Posterior vena cava (tissue), 2 donors: ENCODE measurements at regions of chr17 and their contacts with region 1.

Region 1: GRCh38 chr17:8118769-8119580 is 661 bp upstream of the ALOXE3 start:
- DNase-seq: peak; percentile 96

Region 2: GRCh38 chr17:7266784-7267183 is 852.2 kb before region 1 on chr17:
- intact Hi-C with region 1: loop called in 1 of 2 experiments (anchors 5 kb)
- DNase-seq: no peak

Region 3: GRCh38 chr17:8068736-8069586 is 50.0 kb before region 1 on chr17:
- intact Hi-C with region 1: loop called in 1 of 2 experiments (anchors 1 kb)
- DNase-seq: peak; percentile 81

Region 4: GRCh38 chr17:8189711-8190477 is 70.9 kb after region 1 on chr17 and contains the start of gene BORCS6:
- intact Hi-C with region 1: loop called in 1 of 2 experiments (anchors 5 kb)
- DNase-seq: peak; percentile 99
- total RNA-seq, gene BORCS6: 4.5 to 5.6 TPM

Region 5: DNA sequence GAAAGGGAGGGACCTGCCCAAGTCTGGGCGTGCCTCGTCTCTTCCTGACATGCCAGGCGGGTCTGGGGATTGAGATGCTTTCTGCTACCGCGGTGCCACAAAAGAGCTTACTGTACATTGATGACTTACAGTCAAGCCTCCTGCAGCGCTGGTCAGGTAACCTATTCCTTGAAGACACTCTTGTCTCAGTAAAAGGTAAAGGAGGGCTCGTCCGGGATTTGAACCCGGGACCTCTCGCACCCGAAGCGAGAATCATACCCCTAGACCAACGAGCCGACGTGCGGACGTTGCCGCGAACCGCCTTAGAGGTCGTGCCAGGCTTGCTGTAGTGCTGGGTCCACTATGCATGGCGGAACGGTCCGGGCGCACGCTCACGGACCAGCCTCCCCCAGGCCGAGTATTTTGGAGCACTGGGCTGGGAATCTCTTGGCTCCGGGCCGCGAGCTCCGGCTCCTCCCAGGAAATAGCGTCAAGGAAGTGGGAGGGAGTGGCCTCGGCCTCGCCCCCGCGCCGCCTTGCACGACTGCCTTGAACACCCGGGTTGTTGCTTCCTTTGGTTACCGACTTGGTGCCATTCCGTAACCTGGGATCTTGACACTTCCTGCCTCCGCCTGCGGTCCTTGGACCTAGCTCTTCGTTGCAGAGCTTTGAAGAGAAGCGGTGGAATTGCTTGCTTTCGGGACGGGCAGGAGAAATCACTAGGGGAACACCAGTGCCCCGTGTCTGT is 103.8 kb after region 1 on chr17:
- intact Hi-C with region 1: loop called in 1 of 2 experiments (anchors 5 kb)
- DNase-seq: peak; percentile 99